CD8-positive, alpha-beta T cell (primary cell): ENCODE measurements at regions of chr10 and their contacts with region 1.

Region 1: GRCh38 chr10:14822879-14823755 is 14.7 kb downstream of the CDNF start:
- DNase-seq: peak in 8 of 9 experiments; percentile 6 to 63 (median 36)
- ATAC-seq: no peak
- H3K4me3 ChIP-seq: no peak overlapping the region
- H3K4me3 Mint-ChIP-seq: no peak overlapping the region
- H3K27ac ChIP-seq: no peak overlapping the region
- H3K27ac Mint-ChIP-seq: no peak overlapping the region
- H3K4me1 ChIP-seq: no peaks in the 10 kb centered on the region
- H3K4me1 Mint-ChIP-seq: peaks cover 2% of the 10 kb centered on the region
- H3K27me3 ChIP-seq: no peaks in the 10 kb centered on the region
- H3K27me3 Mint-ChIP-seq: no peaks in the 10 kb centered on the region
- CTCF ChIP-seq: peak; percentile 75

Region 2: DNA sequence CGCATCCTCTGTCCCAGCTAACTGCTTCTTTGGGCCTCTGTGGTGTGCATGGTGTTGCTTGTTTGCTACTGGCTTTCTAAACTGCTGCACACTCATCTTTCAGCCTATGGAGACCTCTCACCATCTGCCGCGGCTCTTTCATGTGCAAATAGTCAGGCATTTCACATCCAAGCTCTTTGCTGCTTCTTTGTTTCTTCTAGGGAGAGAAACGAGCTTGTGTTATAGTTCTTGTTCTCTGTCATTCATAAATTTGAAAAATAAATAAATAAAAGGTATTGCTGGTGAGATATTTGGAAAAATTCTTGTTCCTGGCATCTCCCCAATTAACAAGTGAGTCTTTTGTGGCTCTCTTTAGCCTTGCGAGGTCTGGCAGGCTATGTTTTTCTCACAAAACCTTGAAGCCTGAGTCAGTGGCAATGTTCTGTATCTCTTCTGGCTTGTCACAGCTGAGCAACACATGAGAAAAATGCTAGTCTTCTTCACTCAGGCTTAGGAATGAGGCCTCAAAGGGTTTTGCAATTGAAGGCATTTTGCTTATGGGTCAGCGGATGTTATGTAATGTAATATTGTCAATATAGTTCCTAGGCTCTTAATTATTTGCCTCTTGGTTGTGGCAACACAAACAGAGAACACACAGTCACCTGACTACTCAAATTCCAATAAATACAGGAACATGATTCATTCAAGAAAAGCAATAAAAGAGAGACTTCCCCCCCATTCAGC is 766.3 kb before region 1 on chr10:
- CTCF ChIA-PET with region 1: no interaction called
- POLR2A ChIA-PET with region 1: no interaction called
- intact Hi-C with region 1: no loop called
- DNase-seq: no peak
- ATAC-seq: no peak
- H3K4me3 ChIP-seq: no peak overlapping the region
- H3K4me3 Mint-ChIP-seq: no peak overlapping the region
- H3K27ac ChIP-seq: no peak overlapping the region
- H3K27ac Mint-ChIP-seq: no peak overlapping the region
- H3K4me1 ChIP-seq: no peaks in the 10 kb centered on the region
- H3K4me1 Mint-ChIP-seq: no peaks in the 10 kb centered on the region
- H3K27me3 ChIP-seq: no peaks in the 10 kb centered on the region
- H3K27me3 Mint-ChIP-seq: no peaks in the 10 kb centered on the region
- CTCF ChIP-seq: no peak

Region 3: GRCh38 chr10:14200698-14201544 is 622.2 kb before region 1 on chr10:
- CTCF ChIA-PET with region 1: interaction called, 6 read pairs
- POLR2A ChIA-PET with region 1: no interaction called
- intact Hi-C with region 1: loop called (anchors 1 kb)
- DNase-seq: no peak
- ATAC-seq: no peak
- H3K4me3 ChIP-seq: no peak overlapping the region
- H3K4me3 Mint-ChIP-seq: no peak overlapping the region
- H3K27ac ChIP-seq: no peak overlapping the region
- H3K27ac Mint-ChIP-seq: no peak overlapping the region
- H3K4me1 ChIP-seq: no peaks in the 10 kb centered on the region
- H3K4me1 Mint-ChIP-seq: no peaks in the 10 kb centered on the region
- H3K27me3 ChIP-seq: peaks cover 0 to 2% of the 10 kb centered on the region in 2 experiments
- H3K27me3 Mint-ChIP-seq: peaks cover 17% of the 10 kb centered on the region
- CTCF ChIP-seq: no peak

Region 4: GRCh38 chr10:14500172-14500765 is 322.8 kb before region 1 on chr10:
- CTCF ChIA-PET with region 1: interaction called, 35 read pairs
- POLR2A ChIA-PET with region 1: no interaction called
- intact Hi-C with region 1: loop called (anchors 1 kb)
- DNase-seq: no peak
- ATAC-seq: no peak
- H3K4me3 ChIP-seq: no peak overlapping the region
- H3K4me3 Mint-ChIP-seq: no peak overlapping the region
- H3K27ac ChIP-seq: no peak overlapping the region
- H3K27ac Mint-ChIP-seq: no peak overlapping the region
- H3K4me1 ChIP-seq: peaks cover 9% of the 10 kb centered on the region
- H3K4me1 Mint-ChIP-seq: peaks cover 6% of the 10 kb centered on the region
- H3K27me3 ChIP-seq: no peaks in the 10 kb centered on the region
- H3K27me3 Mint-ChIP-seq: no peaks in the 10 kb centered on the region
- CTCF ChIP-seq: no peak

Region 5: DNA sequence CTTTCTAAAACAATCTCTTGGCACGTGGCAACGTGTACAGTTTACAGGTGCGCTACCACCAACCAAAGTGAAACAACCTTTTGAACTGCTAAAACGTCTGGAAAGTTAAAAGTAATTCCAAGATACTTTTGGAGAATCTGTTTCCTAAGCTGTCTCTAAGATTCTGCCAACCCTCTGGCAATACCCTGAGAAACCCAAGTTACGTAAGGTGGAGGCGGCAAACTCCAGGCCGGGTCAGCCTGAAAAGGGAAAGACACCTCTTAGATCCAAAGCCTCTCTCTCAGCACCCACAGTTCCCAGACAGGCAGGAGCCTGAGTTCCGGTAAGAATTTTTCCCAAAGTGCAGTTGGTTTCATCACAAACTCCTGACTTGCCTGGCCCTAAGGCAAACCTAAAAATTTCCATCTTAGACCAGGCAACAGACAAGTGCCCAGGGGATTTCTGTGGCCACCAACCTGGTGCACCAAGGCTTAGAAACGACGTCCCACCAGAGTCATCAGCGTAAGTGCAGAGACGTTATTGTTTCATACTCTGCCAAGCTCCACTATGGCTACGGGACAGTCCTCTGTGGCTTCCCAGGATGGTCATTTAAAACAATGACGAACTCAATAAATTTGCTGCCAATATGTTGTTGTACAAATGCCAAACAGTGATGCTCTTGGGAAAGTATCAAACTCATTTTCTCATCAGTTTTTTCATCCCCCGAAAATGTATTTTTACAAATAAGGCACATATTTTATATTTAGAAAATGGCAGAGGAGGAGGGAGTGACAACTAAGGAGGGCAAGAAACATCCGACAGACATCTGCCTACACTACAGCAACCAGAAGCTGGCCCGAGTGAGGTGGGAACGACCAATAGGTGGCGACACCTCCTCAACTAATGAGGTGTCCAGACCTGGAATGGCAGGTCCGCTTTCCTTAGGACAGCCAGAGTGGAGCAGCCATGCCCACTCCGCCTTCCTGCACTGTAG is 286.6 kb before region 1 on chr10:
- CTCF ChIA-PET with region 1: interaction called, 24 read pairs
- POLR2A ChIA-PET with region 1: no interaction called
- intact Hi-C with region 1: loop called (anchors 1 to 5 kb)
- DNase-seq: peak in 7 of 9 experiments; percentile 28 to 69 (median 52)
- ATAC-seq: peak; percentile 39
- H3K4me3 ChIP-seq: no peak overlapping the region
- H3K4me3 Mint-ChIP-seq: no peak overlapping the region
- H3K27ac ChIP-seq: peak overlapping the region in 1 of 2 experiments; percentile 27
- H3K27ac Mint-ChIP-seq: peak overlapping the region; percentile 57
- H3K4me1 ChIP-seq: peaks cover 47% of the 10 kb centered on the region
- H3K4me1 Mint-ChIP-seq: peaks cover 96% of the 10 kb centered on the region
- H3K27me3 ChIP-seq: no peaks in the 10 kb centered on the region
- H3K27me3 Mint-ChIP-seq: no peaks in the 10 kb centered on the region
- CTCF ChIP-seq: peak; percentile 39